CD14-positive monocyte (primary cell): ENCODE measurements at regions of chr6 and their contacts with region 1.

Region 1: GRCh38 chr6:144095331-144096002 is at the start of gene SF3B5:
- DNase-seq: peak; percentile 100
- H3K4me3 ChIP-seq: peak within 1 kb of the TSS; percentile 73 to 84 (median 82)
- H3K4me3 Mint-ChIP-seq: peak within 1 kb of the TSS; percentile 95 to 97
- H3K27ac ChIP-seq: peak within 1 kb of the TSS; percentile 87 to 94
- H3K27ac Mint-ChIP-seq: peak within 1 kb of the TSS; percentile 96 to 99 (median 97)
- H3K4me1 ChIP-seq: peaks cover 17 to 24% of the 10 kb centered on the region in 2 donors
- H3K4me1 Mint-ChIP-seq: peaks cover 21% of the 10 kb centered on the region
- H3K27me3 ChIP-seq: no peaks in the 10 kb centered on the region
- H3K27me3 Mint-ChIP-seq: peaks cover 0 to 2% (median 2%) of the 10 kb centered on the region in 3 donors
- CTCF ChIP-seq: no peak
- polyA plus RNA-seq, gene SF3B5: 271 to 445 (median 355) TPM

Region 2: DNA sequence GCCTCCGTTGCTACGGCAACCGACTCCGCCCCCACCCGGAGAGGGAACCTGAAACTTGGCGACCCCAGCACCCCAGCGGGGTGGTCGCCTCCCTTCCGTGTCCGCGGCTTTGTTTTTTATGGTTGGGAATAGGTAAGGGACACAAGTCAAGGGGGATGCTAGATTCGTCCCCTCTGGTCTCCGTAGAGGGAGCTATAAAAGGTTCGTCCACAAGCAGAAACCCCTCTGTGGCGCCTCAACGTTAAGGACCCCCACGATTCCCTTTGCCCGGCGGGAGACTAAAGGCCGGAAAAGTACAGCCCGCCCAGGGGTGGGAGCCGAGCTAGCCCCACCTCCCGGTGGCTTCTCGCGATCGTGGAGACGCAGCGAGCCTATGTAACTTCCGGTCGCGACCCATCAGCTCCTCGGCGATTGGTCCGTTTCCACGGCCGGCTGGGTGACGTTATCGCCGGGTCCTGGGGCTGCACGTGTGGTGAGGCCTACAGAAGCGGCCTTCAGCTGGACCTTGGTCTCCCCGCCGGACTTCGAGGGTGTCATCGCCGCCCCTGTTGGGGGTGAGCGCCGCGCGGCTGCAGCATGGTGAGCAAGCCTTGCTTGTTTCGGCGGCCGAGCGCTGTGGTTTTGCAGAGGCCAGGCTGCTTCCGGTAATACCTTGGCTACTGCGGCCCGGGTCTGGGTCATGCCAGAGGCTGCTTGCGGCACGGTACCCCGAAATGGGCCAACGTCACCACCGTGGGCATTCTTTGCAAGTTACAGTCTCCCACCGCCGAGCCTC is 252.4 kb before region 1 on chr6 and contains the start of gene LTV1:
- intact Hi-C with region 1: loop called in 1 of 2 experiments (anchors 5 kb)
- DNase-seq: peak; percentile 93 to 94 (median 94)
- H3K4me3 ChIP-seq: peak within 1 kb of the TSS; percentile 61 to 89 (median 72)
- H3K4me3 Mint-ChIP-seq: peak within 1 kb of the TSS; percentile 89 to 96
- H3K27ac ChIP-seq: peak within 1 kb of the TSS; percentile 81 to 97
- H3K27ac Mint-ChIP-seq: peak within 1 kb of the TSS; percentile 95 to 98 (median 97)
- H3K4me1 ChIP-seq: peaks cover 26 to 31% of the 10 kb centered on the region in 2 donors
- H3K4me1 Mint-ChIP-seq: peaks cover 23% of the 10 kb centered on the region
- H3K27me3 ChIP-seq: no peaks in the 10 kb centered on the region
- H3K27me3 Mint-ChIP-seq: no peaks in the 10 kb centered on the region
- CTCF ChIP-seq: no peak
- polyA plus RNA-seq, gene LTV1: 10.5 to 15.4 (median 11.6) TPM